CD14-positive monocyte (primary cell): ENCODE measurements at regions of chr11 and their contacts with region 1.

Region 1: GRCh38 chr11:114075891-114076441 is 16.5 kb downstream of the ZBTB16 start:
- DNase-seq: peak in 2 of 3 donors; percentile 21 to 39
- H3K4me3 ChIP-seq: no peak overlapping the region
- H3K4me3 Mint-ChIP-seq: peak overlapping the region in 1 of 2 donors; percentile 5
- H3K27ac ChIP-seq: no peak overlapping the region
- H3K27ac Mint-ChIP-seq: no peak overlapping the region
- H3K4me1 ChIP-seq: peaks cover 44 to 49% of the 10 kb centered on the region in 2 donors
- H3K4me1 Mint-ChIP-seq: peaks cover 76% of the 10 kb centered on the region
- H3K27me3 ChIP-seq: no peaks in the 10 kb centered on the region
- H3K27me3 Mint-ChIP-seq: peaks cover 13 to 25% (median 15%) of the 10 kb centered on the region in 3 donors
- CTCF ChIP-seq: peak; percentile 71

Region 2: DNA sequence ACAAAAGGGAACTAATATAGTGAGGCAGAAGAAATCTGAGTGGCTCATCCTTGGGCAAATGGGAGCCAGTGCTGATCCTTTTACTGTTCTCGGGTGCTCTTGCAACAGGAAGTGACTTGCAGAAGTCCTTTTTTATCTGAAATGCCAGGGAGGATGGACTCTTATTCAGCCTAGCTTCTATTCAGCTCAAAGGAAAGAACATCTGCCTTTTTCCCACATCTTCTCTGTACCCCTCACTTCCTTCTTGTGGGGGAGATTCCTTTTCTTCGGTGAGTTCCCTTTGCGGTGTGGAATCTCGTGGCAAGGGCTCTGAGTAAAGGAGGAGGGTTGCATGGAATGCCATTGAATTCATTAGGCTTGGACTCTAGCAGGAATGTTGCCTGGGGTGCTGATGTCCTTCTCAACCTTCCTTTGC is 59.8 kb after region 1 on chr11:
- intact Hi-C with region 1: loop called in 1 of 2 experiments (anchors 10 kb)
- DNase-seq: peak; percentile 78 to 92 (median 90)
- H3K4me3 ChIP-seq: peak overlapping the region; percentile 19 to 65 (median 34)
- H3K4me3 Mint-ChIP-seq: peak overlapping the region; percentile 67 to 86
- H3K27ac ChIP-seq: peak overlapping the region; percentile 91 to 93
- H3K27ac Mint-ChIP-seq: peak overlapping the region; percentile 89 to 97 (median 95)
- H3K4me1 ChIP-seq: peaks cover 62 to 65% of the 10 kb centered on the region in 2 donors
- H3K4me1 Mint-ChIP-seq: peaks cover 76% of the 10 kb centered on the region
- H3K27me3 ChIP-seq: no peaks in the 10 kb centered on the region
- H3K27me3 Mint-ChIP-seq: peaks cover 0 to 2% (median 0%) of the 10 kb centered on the region in 3 donors
- CTCF ChIP-seq: no peak

Region 3: GRCh38 chr11:114154271-114155047 is 78.5 kb after region 1 on chr11:
- intact Hi-C with region 1: loop called in 1 of 2 experiments (anchors 5 kb)
- DNase-seq: peak; percentile 77 to 80 (median 79)
- H3K4me3 ChIP-seq: peak overlapping the region in 1 of 3 experiments; percentile 34
- H3K4me3 Mint-ChIP-seq: peak overlapping the region in 1 of 2 donors; percentile 46
- H3K27ac ChIP-seq: peak overlapping the region; percentile 85
- H3K27ac Mint-ChIP-seq: peak overlapping the region; percentile 86 to 96 (median 92)
- H3K4me1 ChIP-seq: peaks cover 60 to 72% of the 10 kb centered on the region in 2 donors
- H3K4me1 Mint-ChIP-seq: peaks cover 85% of the 10 kb centered on the region
- H3K27me3 ChIP-seq: no peaks in the 10 kb centered on the region
- H3K27me3 Mint-ChIP-seq: no peaks in the 10 kb centered on the region
- CTCF ChIP-seq: no peak

Region 4: DNA sequence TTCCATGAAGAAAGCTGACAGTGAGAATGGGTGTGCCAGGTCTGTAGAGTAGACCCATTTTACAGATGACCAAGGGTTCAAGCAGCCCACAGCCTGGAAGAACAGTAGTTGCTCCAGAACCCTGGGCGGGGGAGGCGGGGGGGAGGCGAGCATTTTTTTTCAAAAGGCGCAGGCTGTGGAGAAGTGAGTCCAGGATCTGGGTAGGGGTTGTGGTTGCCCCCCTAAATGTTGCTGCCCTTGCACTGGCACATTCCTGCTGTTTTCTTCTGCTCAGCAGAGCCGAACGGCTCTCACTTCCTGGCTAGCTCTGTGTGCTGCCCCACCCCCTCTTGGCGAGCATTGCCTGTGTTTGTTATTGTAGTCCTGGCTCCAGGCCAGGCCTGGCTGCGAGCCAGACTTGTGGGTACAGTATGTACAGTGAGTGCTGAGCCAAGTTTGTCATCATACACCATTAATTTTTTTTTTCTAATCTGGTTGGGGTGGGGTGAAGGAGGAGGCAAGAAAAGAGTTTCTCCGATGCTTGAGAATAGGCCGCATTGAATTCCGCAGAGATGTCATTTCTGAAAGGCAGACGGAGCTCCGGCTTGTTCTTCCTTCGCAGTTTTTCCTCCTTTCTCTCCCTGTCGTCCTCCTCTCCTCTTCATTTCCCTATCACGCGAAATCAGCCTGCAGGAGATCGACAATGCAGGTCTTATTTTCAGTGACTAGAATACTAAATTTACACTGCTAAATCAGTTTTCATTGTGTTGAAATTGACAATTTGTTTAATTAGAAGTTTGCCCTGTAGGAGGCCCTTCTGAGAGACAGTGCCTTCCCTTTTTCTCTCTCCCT is 84.1 kb after region 1 on chr11:
- intact Hi-C with region 1: loop called in 1 of 2 experiments (anchors 5 kb)
- DNase-seq: peak; percentile 93 to 98 (median 97)
- H3K4me3 ChIP-seq: peak overlapping the region; percentile 24 to 74 (median 37)
- H3K4me3 Mint-ChIP-seq: peak overlapping the region; percentile 70 to 85
- H3K27ac ChIP-seq: peak overlapping the region; percentile 56 to 86
- H3K27ac Mint-ChIP-seq: peak overlapping the region; percentile 91 to 98 (median 95)
- H3K4me1 ChIP-seq: peaks cover 85 to 99% of the 10 kb centered on the region in 2 donors
- H3K4me1 Mint-ChIP-seq: peaks cover 99% of the 10 kb centered on the region
- H3K27me3 ChIP-seq: no peaks in the 10 kb centered on the region
- H3K27me3 Mint-ChIP-seq: peaks cover 0 to 1% (median 0%) of the 10 kb centered on the region in 3 donors
- CTCF ChIP-seq: peak; percentile 20